ENCODE measurements at regions of chr7 and their contacts with region 1.

Region 1: DNA sequence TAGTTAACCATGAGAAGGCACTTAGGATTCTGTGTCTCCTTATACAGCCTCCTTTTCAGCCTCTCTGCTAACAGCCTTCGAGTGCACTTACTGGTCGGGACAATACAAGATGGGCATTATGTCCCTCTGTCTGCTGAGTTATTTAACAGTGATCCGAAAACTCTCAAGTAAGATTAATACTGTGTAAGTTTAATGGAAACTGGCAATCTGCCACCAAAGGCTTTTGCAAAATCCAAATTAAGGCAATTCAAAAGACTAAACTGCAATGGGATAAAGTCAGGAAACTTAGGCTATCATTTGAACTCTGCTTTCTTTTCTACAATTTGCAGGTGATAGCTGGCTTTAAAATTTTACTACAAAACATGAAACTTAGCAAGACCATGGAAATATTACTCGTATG is 477.8 kb downstream of the TFEC start:
- DNase-seq: no peak
- ATAC-seq: no peak
- H3K4me3 ChIP-seq: no peak overlapping the region
- H3K27ac ChIP-seq: no peak overlapping the region
- H3K4me1 ChIP-seq: no peaks in the 10 kb centered on the region
- H3K27me3 ChIP-seq: no peaks in the 10 kb centered on the region
- CTCF ChIP-seq: no peak

Region 2: DNA sequence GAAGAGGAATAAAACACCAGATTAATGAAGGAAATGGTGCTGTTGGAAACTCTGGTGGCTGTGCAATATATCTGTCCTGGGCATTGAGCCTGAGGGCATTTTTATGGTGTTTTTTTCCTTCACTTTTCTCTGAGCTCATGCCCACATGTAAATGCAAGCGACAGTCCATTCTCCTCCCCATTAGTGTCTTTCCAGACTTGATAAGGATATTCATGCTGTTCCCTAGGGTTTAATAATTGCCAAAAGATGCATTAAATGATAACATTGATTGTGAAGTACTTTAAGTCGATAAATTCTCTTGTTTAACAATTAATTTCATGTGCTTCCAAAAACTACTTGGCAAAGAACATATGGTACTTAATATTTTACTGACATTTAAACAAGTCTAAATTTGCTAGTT is 246.2 kb before region 1 on chr7:
- intact Hi-C with region 1: loop called in 1 of 2 experiments (anchors 5 kb)
- DNase-seq: no peak
- ATAC-seq: no peak
- H3K4me3 ChIP-seq: no peak overlapping the region
- H3K27ac ChIP-seq: no peak overlapping the region
- H3K4me1 ChIP-seq: no peaks in the 10 kb centered on the region
- H3K27me3 ChIP-seq: no peaks in the 10 kb centered on the region
- CTCF ChIP-seq: no peak